Naive thymus-derived CD4-positive, alpha-beta T cell (primary cell): ENCODE measurements at regions of chr14 and their contacts with region 1.

Region 1: GRCh38 chr14:65958664-65959562 is 527.3 kb upstream of the CCDC196 start:
- DNase-seq: peak in 6 of 9 donors; percentile 15 to 52 (median 42)
- ATAC-seq: peak; percentile 66
- H3K4me3 ChIP-seq: no peak overlapping the region
- H3K4me3 Mint-ChIP-seq: peak overlapping the region in 1 of 10 donors; percentile 50
- H3K27ac ChIP-seq: no peak overlapping the region
- H3K27ac Mint-ChIP-seq: peak overlapping the region in 6 of 9 donors; percentile 3 to 80 (median 39)
- H3K4me1 ChIP-seq: peaks cover 12 to 14% of the 10 kb centered on the region in 2 donors
- H3K4me1 Mint-ChIP-seq: peaks cover 0 to 47% (median 20%) of the 10 kb centered on the region in 7 donors
- H3K27me3 ChIP-seq: no peaks in the 10 kb centered on the region
- H3K27me3 Mint-ChIP-seq: peaks cover 0 to 17% (median 0%) of the 10 kb centered on the region in 5 donors

Region 2: GRCh38 chr14:65164068-65164824 is 794.7 kb before region 1 on chr14:
- CTCF ChIA-PET with region 1: interaction called, 20 read pairs
- POLR2A ChIA-PET with region 1: no interaction called
- intact Hi-C with region 1: loop called (anchors 1 to 2 kb)
- DNase-seq: peak in 7 of 9 donors; percentile 29 to 67 (median 58)
- ATAC-seq: peak; percentile 76
- H3K4me3 ChIP-seq: no peak overlapping the region
- H3K4me3 Mint-ChIP-seq: no peak overlapping the region
- H3K27ac ChIP-seq: no peak overlapping the region
- H3K27ac Mint-ChIP-seq: peak overlapping the region in 1 of 9 donors; percentile 67
- H3K4me1 ChIP-seq: no peaks in the 10 kb centered on the region
- H3K4me1 Mint-ChIP-seq: peaks cover 0 to 43% (median 0%) of the 10 kb centered on the region in 7 donors
- H3K27me3 ChIP-seq: no peaks in the 10 kb centered on the region
- H3K27me3 Mint-ChIP-seq: no peaks in the 10 kb centered on the region

Region 3: GRCh38 chr14:65731933-65732510 is 226.9 kb before region 1 on chr14:
- CTCF ChIA-PET with region 1: no interaction called
- POLR2A ChIA-PET with region 1: no interaction called
- intact Hi-C with region 1: loop called in 1 of 2 experiments (anchors 10 kb)
- DNase-seq: no peak
- ATAC-seq: peak; percentile 51
- H3K4me3 ChIP-seq: no peak overlapping the region
- H3K4me3 Mint-ChIP-seq: peak overlapping the region in 1 of 10 donors; percentile 74
- H3K27ac ChIP-seq: no peak overlapping the region
- H3K27ac Mint-ChIP-seq: peak overlapping the region in 4 of 9 donors; percentile 50 to 88 (median 71)
- H3K4me1 ChIP-seq: no peaks in the 10 kb centered on the region
- H3K4me1 Mint-ChIP-seq: peaks cover 4 to 15% (median 9%) of the 10 kb centered on the region in 7 donors
- H3K27me3 ChIP-seq: no peaks in the 10 kb centered on the region
- H3K27me3 Mint-ChIP-seq: no peaks in the 10 kb centered on the region

Region 4: GRCh38 chr14:65824285-65824977 is 134.5 kb before region 1 on chr14:
- CTCF ChIA-PET with region 1: interaction called, 39 read pairs
- POLR2A ChIA-PET with region 1: interaction called, 3 read pairs
- intact Hi-C with region 1: loop called (anchors 1 to 5 kb)
- DNase-seq: peak in 8 of 9 donors; percentile 38 to 71 (median 60)
- ATAC-seq: peak; percentile 93
- H3K4me3 ChIP-seq: no peak overlapping the region
- H3K4me3 Mint-ChIP-seq: peak overlapping the region in 1 of 10 donors; percentile 39
- H3K27ac ChIP-seq: no peak overlapping the region
- H3K27ac Mint-ChIP-seq: peak overlapping the region in 3 of 9 donors; percentile 0 to 66 (median 66)
- H3K4me1 ChIP-seq: peaks cover 6 to 8% of the 10 kb centered on the region in 2 donors
- H3K4me1 Mint-ChIP-seq: peaks cover 3 to 33% (median 14%) of the 10 kb centered on the region in 7 donors
- H3K27me3 ChIP-seq: no peaks in the 10 kb centered on the region
- H3K27me3 Mint-ChIP-seq: peaks cover 0 to 7% (median 0%) of the 10 kb centered on the region in 5 donors

Region 5: DNA sequence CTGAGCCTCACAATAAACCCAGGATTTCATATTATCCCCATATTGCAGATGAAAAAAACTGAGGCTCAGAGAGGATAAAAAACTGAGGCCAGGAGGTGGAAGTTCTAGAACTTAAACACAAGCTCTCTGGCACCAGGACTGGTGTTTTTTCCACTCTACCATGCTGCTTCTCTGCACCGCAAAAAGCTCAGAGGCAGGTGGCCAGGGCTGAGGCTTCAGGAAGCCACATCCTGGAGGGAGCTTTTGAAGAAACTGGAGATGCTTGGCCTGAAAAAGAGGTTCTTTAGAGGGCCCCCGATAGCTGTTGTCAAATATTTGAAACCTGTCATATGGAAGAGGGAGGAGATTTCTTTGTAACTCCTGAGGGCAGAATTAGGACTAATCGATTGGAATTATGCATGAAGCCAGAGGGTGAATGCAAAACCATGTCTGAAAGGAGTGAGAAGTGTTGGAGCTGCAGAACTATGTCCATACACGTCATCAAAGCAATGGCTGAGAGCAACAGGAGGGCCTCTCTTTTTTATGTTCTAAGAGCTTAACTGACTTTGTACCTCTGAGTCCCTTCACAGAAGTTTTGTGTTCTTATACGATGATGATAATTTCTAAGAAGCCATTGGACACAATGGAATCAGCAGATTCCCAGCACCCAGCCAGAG is 97.8 kb before region 1 on chr14:
- CTCF ChIA-PET with region 1: interaction called, 5 read pairs
- POLR2A ChIA-PET with region 1: interaction called, 4 read pairs
- intact Hi-C with region 1: loop called in 1 of 2 experiments (anchors 5 kb)
- DNase-seq: peak in 7 of 9 donors; percentile 22 to 64 (median 49)
- ATAC-seq: peak; percentile 62
- H3K4me3 ChIP-seq: no peak overlapping the region
- H3K4me3 Mint-ChIP-seq: peak overlapping the region; percentile 12 to 78 (median 61)
- H3K27ac ChIP-seq: no peak overlapping the region
- H3K27ac Mint-ChIP-seq: peak overlapping the region; percentile 69 to 85 (median 78)
- H3K4me1 ChIP-seq: peaks cover 18 to 53% of the 10 kb centered on the region in 2 donors
- H3K4me1 Mint-ChIP-seq: peaks cover 41 to 73% (median 66%) of the 10 kb centered on the region in 7 donors
- H3K27me3 ChIP-seq: no peaks in the 10 kb centered on the region
- H3K27me3 Mint-ChIP-seq: peaks cover 0 to 1% (median 0%) of the 10 kb centered on the region in 5 donors

Region 6: DNA sequence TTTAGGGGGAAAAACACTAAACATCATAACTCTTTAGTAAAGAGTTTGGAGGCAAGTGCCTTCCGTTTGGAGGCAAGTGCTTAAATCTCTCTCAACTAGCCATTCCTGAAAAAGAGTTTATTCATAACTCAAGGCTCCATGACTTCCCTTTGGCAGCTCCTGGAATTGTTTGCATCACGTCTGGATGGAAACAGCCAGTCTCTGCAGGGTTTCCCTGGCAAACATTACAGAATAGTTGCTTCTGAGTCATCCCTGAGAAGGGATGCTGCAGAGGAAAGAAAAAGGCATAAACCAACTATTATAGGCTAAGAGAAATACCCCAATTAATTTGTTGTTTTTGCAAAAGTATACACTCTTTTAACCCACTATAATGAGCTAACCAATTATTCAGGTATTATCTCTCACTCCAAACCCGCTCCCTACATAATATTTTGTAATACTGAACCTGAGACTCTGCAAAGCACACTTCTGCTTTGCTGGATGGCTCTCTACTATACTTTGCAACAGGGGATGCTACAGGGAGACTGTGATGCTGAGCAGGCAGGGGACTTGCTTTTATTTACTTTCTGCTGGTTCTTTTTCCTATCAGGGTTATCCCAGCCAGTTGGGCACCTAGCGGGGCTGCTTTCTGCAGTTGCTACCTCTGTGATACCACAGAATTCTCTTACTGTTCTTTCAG is 48.7 kb before region 1 on chr14:
- CTCF ChIA-PET with region 1: no interaction called
- POLR2A ChIA-PET with region 1: no interaction called
- intact Hi-C with region 1: no loop called
- DNase-seq: no peak
- ATAC-seq: no peak
- H3K4me3 ChIP-seq: no peak overlapping the region
- H3K4me3 Mint-ChIP-seq: no peak overlapping the region
- H3K27ac ChIP-seq: no peak overlapping the region
- H3K27ac Mint-ChIP-seq: peak overlapping the region in 1 of 9 donors; percentile 15
- H3K4me1 ChIP-seq: peaks cover 0 to 8% of the 10 kb centered on the region in 2 donors
- H3K4me1 Mint-ChIP-seq: peaks cover 14 to 64% (median 56%) of the 10 kb centered on the region in 7 donors
- H3K27me3 ChIP-seq: no peaks in the 10 kb centered on the region
- H3K27me3 Mint-ChIP-seq: peaks cover 0 to 24% (median 0%) of the 10 kb centered on the region in 5 donors

Region 7: DNA sequence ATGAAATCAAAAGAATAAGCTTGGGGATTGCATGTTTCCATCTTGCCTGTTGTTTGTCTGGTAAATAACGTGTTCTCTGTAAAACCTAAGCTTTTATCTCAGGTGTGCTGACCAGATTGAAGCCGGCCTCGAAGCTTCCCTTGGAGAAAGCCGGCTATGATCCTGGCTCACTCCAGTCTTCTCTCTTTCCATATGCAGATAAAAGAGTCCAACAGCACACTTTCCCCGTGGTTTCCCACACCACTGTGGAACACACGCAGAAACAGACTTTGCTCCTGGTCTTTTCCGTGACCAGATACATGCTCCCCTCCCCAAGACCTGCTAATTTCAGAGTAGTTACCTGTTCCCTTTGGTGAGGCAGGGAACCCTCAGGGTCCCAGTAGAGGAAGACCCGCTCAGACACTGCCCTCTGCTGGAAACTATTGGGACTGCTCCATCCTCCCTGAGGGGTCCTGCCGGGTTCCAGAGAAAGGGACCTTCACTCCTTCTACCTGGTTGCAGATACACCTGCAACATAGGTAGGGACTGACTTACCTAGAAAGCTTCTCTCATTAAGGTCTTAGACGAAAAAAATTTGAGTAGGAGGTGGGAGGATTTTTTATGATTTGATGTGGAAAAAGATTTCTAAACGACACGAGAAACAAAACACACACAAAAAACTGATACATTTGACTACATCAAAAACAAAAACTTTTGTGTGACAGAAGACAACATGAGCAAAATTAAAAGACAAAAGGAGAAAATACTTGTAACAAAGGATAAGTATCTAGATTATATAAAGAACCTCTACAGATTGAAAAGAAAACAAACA is 111.8 kb after region 1 on chr14:
- CTCF ChIA-PET with region 1: interaction called, 6 read pairs
- POLR2A ChIA-PET with region 1: no interaction called
- intact Hi-C with region 1: loop called (anchors 1 kb)
- DNase-seq: peak; percentile 41 to 76 (median 62)
- ATAC-seq: peak; percentile 91
- H3K4me3 ChIP-seq: no peak overlapping the region
- H3K4me3 Mint-ChIP-seq: no peak overlapping the region
- H3K27ac ChIP-seq: no peak overlapping the region
- H3K27ac Mint-ChIP-seq: peak overlapping the region in 1 of 9 donors; percentile 28
- H3K4me1 ChIP-seq: no peaks in the 10 kb centered on the region
- H3K4me1 Mint-ChIP-seq: peaks cover 4 to 12% (median 8%) of the 10 kb centered on the region in 7 donors
- H3K27me3 ChIP-seq: no peaks in the 10 kb centered on the region
- H3K27me3 Mint-ChIP-seq: peaks cover 0 to 20% (median 6%) of the 10 kb centered on the region in 5 donors

Region 8: DNA sequence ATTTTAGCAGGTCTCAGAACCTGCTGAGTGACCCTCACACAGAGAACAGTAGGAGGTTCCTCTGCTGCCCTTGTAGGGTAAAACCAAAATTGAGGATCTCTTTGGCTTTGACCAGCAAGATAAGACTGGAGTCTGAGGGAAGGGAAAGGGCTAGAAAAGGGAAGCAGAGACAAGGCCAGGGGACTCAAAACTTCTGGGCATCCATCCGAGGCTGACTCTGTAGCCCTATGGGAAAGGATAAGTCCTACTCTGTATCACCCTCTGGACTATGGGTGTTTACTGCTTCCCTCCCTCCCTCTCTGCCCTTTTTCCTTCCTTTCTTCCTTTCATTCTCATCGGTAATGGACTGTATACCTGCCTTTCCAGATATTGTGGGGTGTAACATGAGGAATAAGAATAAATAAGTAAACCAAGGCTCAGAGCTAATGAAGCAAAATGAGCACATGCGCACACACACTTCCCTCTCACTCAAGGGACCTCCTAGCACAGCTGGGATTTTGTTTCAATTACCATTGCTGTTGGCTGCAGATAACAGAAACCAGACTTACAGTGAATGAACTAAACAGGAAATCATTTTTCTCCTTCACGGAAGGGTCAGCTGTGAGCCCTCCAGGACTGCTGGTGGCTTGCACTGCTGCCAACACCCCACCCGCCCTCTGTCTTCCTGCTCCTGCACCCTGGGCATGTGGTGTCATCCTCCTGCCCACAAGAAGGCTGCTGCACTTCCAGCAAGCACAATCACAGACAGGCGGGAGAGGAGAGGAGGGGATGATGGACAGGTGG is 122.9 kb after region 1 on chr14:
- CTCF ChIA-PET with region 1: no interaction called
- POLR2A ChIA-PET with region 1: no interaction called
- intact Hi-C with region 1: no loop called
- DNase-seq: no peak
- ATAC-seq: no peak
- H3K4me3 ChIP-seq: no peak overlapping the region
- H3K4me3 Mint-ChIP-seq: no peak overlapping the region
- H3K27ac ChIP-seq: no peak overlapping the region
- H3K27ac Mint-ChIP-seq: no peak overlapping the region
- H3K4me1 ChIP-seq: no peaks in the 10 kb centered on the region
- H3K4me1 Mint-ChIP-seq: no peaks in the 10 kb centered on the region
- H3K27me3 ChIP-seq: no peaks in the 10 kb centered on the region
- H3K27me3 Mint-ChIP-seq: peaks cover 0 to 29% (median 4%) of the 10 kb centered on the region in 5 donors